SK-N-SH (cell line): ENCODE measurements at regions of chr1 and their contacts with region 1.

Region 1: DNA sequence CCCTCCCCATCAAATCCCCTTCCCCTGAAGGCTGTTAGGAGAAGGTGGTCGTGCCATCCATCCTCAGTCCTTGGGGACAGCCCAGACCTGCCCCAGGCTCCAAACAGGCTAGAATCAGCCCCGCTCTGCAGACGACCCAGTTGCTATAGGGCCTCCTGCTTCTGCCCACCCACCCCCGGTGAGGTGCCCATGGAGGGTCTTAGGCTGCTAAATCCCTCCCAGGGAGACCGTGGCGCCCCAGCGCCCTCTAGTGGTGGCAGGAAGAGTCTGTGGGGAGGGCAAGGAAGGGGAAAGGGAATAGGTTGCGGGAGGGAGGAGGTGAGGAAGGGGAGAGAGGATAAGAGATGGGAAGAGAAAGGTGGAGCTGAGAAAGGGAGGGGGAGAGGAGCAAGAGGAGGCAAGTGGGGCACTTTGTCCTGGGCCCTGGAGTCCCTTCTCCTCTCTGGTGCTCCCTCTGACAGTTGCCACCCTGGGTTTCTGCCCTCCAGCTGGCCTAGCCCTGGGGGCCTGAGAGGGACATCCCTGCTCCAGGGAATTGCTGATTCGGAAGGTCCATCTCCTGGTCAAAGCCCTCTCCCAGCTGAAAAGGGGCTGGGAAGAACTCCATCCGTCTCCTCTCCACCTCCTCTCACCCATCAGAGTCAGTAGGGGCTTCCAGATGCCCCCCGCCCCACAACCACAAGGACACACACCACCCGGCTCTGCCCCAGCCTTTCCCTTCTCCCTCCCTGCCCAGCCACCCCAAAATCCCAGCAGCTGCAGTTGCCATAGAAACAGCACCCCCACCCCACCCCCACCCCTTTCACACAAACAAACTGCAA is 55.4 kb downstream of the CAMK2N1 start:
- DNase-seq: peak; percentile 86
- H3K4me3 ChIP-seq: peak overlapping the region in 1 of 2 experiments; percentile 43; a peak in 1 of 4 replicates
- H3K27ac ChIP-seq: no peak overlapping the region
- H3K4me1 ChIP-seq: no peaks in the 10 kb centered on the region; a peak in 2 of 4 replicates
- H3K27me3 ChIP-seq: no peaks in the 10 kb centered on the region
- CTCF ChIP-seq: peak; percentile 81
- EP300 ChIP-seq: no peak
- RAD21 ChIP-seq: peak; percentile 88

Region 2: GRCh38 chr1:20371411-20371810 is 59.2 kb before region 1 on chr1:
- CTCF ChIA-PET with region 1: interaction called, 31 read pairs
- POLR2A ChIA-PET with region 1: no interaction called
- DNase-seq: no peak
- H3K4me3 ChIP-seq: no peak overlapping the region
- H3K27ac ChIP-seq: no peak overlapping the region
- H3K4me1 ChIP-seq: peaks cover 0 to 4% of the 10 kb centered on the region in 2 experiments; a peak in 2 of 4 replicates
- H3K27me3 ChIP-seq: peaks cover 16% of the 10 kb centered on the region
- CTCF ChIP-seq: no peak
- EP300 ChIP-seq: no peak
- RAD21 ChIP-seq: no peak

Region 3: GRCh38 chr1:20386323-20387081 is 44.1 kb before region 1 on chr1:
- CTCF ChIA-PET with region 1: interaction called, 22 read pairs
- POLR2A ChIA-PET with region 1: no interaction called
- DNase-seq: peak; percentile 88
- H3K4me3 ChIP-seq: no peak overlapping the region
- H3K27ac ChIP-seq: peak overlapping the region in 1 of 2 experiments; percentile 23; a peak in 1 of 4 replicates
- H3K4me1 ChIP-seq: peaks cover 0 to 27% of the 10 kb centered on the region in 2 experiments; a peak in 1 of 4 replicates
- H3K27me3 ChIP-seq: peaks cover 19% of the 10 kb centered on the region
- CTCF ChIP-seq: no peak
- EP300 ChIP-seq: no peak
- RAD21 ChIP-seq: no peak

Region 4: GRCh38 chr1:20440785-20441200 is 10.2 kb after region 1 on chr1:
- CTCF ChIA-PET with region 1: interaction called, 22 read pairs
- POLR2A ChIA-PET with region 1: no interaction called
- DNase-seq: peak; percentile 80
- H3K4me3 ChIP-seq: no peak overlapping the region
- H3K27ac ChIP-seq: no peak overlapping the region
- H3K4me1 ChIP-seq: peaks cover 0 to 11% of the 10 kb centered on the region in 2 experiments; a peak in 1 of 4 replicates
- H3K27me3 ChIP-seq: no peaks in the 10 kb centered on the region; the same call in 1 of the 2 replicates
- CTCF ChIP-seq: no peak
- EP300 ChIP-seq: no peak
- RAD21 ChIP-seq: no peak

Region 5: GRCh38 chr1:20472860-20473711 is 42.5 kb after region 1 on chr1:
- CTCF ChIA-PET with region 1: interaction called, 13 read pairs
- POLR2A ChIA-PET with region 1: no interaction called
- DNase-seq: peak; percentile 78
- H3K4me3 ChIP-seq: no peak overlapping the region
- H3K27ac ChIP-seq: peak overlapping the region in 1 of 2 experiments; percentile 74; a peak in 2 of 4 replicates
- H3K4me1 ChIP-seq: peaks cover 0 to 38% of the 10 kb centered on the region in 2 experiments; a peak in 2 of 4 replicates
- H3K27me3 ChIP-seq: no peaks in the 10 kb centered on the region
- CTCF ChIP-seq: no peak
- EP300 ChIP-seq: no peak
- RAD21 ChIP-seq: no peak

Region 6: DNA sequence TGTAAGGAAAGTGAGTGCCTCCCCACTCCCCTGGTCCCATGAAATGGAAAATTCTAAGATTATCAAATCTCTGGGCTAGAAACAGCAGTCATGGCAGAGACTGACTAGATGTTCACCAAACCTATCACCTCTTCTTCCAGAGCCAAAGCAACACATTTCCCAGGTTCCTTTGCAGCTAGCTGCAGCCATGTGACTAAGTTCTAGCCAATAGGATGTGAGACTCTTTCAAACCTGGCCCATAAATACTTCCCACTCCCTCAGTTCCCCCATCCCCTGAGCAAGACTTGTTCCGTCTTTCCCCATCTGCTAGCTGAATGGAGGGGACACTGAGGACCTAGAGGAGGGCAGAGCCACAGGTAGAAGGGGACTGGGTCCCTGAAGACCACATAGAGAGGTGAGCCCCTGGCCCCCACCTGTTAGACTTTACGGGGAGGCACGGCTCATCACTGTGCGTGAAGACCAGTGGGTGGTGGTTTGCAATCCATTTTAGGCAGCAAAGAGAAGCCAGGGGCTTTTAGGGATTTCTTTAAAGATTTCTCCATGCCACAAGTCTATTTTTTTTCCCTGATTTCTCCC is 139.0 kb after region 1 on chr1:
- CTCF ChIA-PET with region 1: no interaction called
- POLR2A ChIA-PET with region 1: no interaction called
- DNase-seq: no peak
- H3K4me3 ChIP-seq: no peak overlapping the region
- H3K27ac ChIP-seq: no peak overlapping the region
- H3K4me1 ChIP-seq: no peaks in the 10 kb centered on the region
- H3K27me3 ChIP-seq: peaks cover 8% of the 10 kb centered on the region; the same call in 1 of the 2 replicates
- CTCF ChIP-seq: no peak
- EP300 ChIP-seq: no peak
- RAD21 ChIP-seq: no peak

Region 7: DNA sequence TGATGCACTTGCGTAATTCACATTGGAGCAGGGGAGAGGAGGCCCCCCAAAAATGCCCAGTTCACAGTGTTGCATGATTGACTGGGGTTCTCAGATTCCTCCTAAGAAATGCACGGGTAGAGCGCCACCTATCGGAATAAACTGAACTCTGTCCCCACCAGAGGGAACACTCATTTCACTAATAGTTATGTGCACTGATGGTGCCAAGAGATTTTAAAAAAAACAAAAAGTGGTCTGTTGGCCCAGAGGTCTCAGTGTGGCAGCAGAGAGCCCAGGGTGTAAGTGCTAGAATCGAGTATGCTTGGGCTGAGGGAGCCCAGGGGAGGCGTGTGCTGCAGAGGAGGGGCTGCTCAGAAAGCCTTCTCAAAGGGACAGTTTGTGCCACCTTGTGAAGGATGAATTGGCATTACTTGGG is 209.6 kb after region 1 on chr1:
- CTCF ChIA-PET with region 1: no interaction called
- POLR2A ChIA-PET with region 1: no interaction called
- DNase-seq: peak; percentile 79
- H3K4me3 ChIP-seq: no peak overlapping the region; a peak in 1 of 4 replicates
- H3K27ac ChIP-seq: no peak overlapping the region
- H3K4me1 ChIP-seq: no peaks in the 10 kb centered on the region
- H3K27me3 ChIP-seq: no peaks in the 10 kb centered on the region
- CTCF ChIP-seq: peak; percentile 84
- EP300 ChIP-seq: no peak
- RAD21 ChIP-seq: peak; percentile 82